GM12878 (cell line): ENCODE measurements at regions of chr11 and their contacts with region 1.

Region 1: DNA sequence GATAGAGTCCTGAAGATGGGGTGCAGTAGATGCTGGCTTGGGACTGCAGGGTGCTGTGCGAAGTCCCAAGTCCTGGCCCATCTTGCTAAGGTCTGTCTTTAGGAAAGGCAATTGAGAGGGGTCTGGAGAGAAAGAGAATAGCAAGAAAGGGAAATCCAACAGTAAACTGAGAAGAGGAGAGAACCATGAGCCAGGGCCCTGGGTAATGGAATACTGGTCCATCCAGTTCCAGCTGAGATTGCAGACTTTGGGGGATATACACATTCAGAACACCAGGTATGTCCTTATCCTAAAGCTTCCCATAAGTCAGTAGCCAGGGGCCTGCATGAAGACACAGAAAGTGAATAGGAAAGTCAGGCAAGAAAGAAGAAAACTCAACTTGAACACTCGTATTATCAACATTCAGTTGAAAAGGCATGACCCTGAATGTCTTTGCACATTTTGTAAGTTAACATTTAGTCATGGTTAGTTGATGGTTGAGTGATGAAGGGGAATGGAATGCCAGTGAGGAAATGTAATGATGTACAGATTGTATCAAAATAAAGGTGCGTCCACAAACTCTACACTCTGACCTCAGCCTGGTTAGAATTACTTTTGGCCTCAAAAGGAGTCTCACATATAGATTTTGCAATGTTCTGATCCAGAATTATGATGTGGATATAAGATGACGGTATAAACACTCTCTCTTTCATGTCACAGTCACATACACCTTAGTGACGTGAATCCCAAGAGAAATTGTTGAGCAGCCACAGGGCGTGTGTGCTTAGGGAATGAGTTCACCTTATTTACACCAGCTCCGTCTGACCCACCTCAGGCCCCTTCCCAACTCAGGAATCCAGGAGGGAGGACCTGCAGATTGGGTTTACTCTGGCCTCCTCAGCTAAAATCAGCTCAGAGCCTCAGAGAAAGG is 100.3 kb downstream of the RDX start:
- DNase-seq: no peak
- ATAC-seq: no peak
- H3K4me3 ChIP-seq: no peak overlapping the region
- H3K27ac ChIP-seq: no peak overlapping the region
- H3K4me1 ChIP-seq: peaks cover 4% of the 10 kb centered on the region; the same call in 1 of the 2 replicates
- H3K27me3 ChIP-seq: no peaks in the 10 kb centered on the region
- CTCF ChIP-seq: no peak
- EP300 ChIP-seq: no peak
- POLR2A ChIP-seq: no peak
- RAD21 ChIP-seq: no peak

Region 2: GRCh38 chr11:109853156-109853776 is 342.8 kb before region 1 on chr11:
- CTCF ChIA-PET with region 1: interaction called, 14 read pairs
- POLR2A ChIA-PET with region 1: no interaction called
- RAD21 ChIA-PET with region 1: interaction called, 9 read pairs
- SMC1A ChIA-PET with region 1: interaction called, 34 read pairs
- in situ Hi-C with region 1: no loop called
- intact Hi-C with region 1: loop called (anchors 5 kb)
- DNase-seq: peak; percentile 56
- ATAC-seq: peak; percentile 89
- H3K4me3 ChIP-seq: no peak overlapping the region
- H3K27ac ChIP-seq: no peak overlapping the region
- H3K4me1 ChIP-seq: no peaks in the 10 kb centered on the region
- H3K27me3 ChIP-seq: no peaks in the 10 kb centered on the region
- CTCF ChIP-seq: peak; percentile 69 to 95 (median 81)
- EP300 ChIP-seq: no peak
- POLR2A ChIP-seq: no peak
- RAD21 ChIP-seq: peak; percentile 99

Region 3: GRCh38 chr11:110230377-110230776 is 34.3 kb after region 1 on chr11:
- CTCF ChIA-PET with region 1: interaction called, 7 read pairs
- POLR2A ChIA-PET with region 1: no interaction called
- RAD21 ChIA-PET with region 1: no interaction called
- SMC1A ChIA-PET with region 1: interaction called, 13 read pairs
- in situ Hi-C with region 1: no loop called
- intact Hi-C with region 1: no loop called
- DNase-seq: no peak
- ATAC-seq: no peak
- H3K4me3 ChIP-seq: no peak overlapping the region
- H3K27ac ChIP-seq: no peak overlapping the region
- H3K4me1 ChIP-seq: no peaks in the 10 kb centered on the region
- H3K27me3 ChIP-seq: no peaks in the 10 kb centered on the region
- CTCF ChIP-seq: no peak
- EP300 ChIP-seq: no peak
- POLR2A ChIP-seq: no peak
- RAD21 ChIP-seq: no peak

Region 4: GRCh38 chr11:110349138-110349996 is 153.3 kb after region 1 on chr11:
- CTCF ChIA-PET with region 1: interaction called, 6 read pairs
- POLR2A ChIA-PET with region 1: no interaction called
- RAD21 ChIA-PET with region 1: interaction called, 4 read pairs
- SMC1A ChIA-PET with region 1: interaction called, 16 read pairs
- in situ Hi-C with region 1: no loop called
- intact Hi-C with region 1: no loop called
- DNase-seq: peak; percentile 94
- ATAC-seq: peak; percentile 86
- H3K4me3 ChIP-seq: peak overlapping the region; percentile 38; the same call in 1 of the 2 replicates
- H3K27ac ChIP-seq: peak overlapping the region; percentile 96
- H3K4me1 ChIP-seq: peaks cover 43% of the 10 kb centered on the region
- H3K27me3 ChIP-seq: no peaks in the 10 kb centered on the region
- CTCF ChIP-seq: peak in 1 of 3 experiments; percentile 33; a peak in 2 of 6 replicates
- EP300 ChIP-seq: peak; percentile 94 to 99
- POLR2A ChIP-seq: peak; percentile 30; the same call in 1 of the 2 replicates
- RAD21 ChIP-seq: peak; percentile 51

Region 5: DNA sequence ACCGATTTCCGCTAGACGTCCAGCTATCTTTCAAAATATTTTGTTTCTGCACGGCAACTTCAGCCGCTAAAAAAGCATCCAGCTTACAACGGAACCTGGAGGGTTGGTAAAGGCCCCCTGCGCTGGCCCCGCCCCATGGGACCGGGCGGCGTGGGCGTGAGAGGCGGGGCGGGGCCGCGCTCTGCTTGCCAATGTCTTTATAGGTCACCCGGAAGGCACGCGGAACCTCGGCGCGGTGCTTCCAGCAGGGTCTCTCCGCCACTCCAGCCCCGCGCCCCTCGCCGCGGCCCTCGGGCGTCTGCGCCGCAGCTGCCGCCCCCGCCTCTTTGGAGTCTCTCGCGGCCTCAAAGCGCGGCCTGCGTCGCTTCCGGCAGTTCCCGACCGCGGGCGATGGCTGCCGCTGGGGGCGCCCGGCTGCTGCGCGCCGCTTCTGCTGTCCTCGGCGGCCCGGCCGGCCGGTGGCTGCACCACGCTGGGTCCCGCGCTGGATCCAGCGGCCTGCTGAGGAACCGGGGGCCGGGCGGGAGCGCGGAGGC is 233.7 kb after region 1 on chr11 and contains the start of gene FDX1:
- CTCF ChIA-PET with region 1: interaction called, 178 read pairs
- POLR2A ChIA-PET with region 1: interaction called, 4 read pairs
- RAD21 ChIA-PET with region 1: interaction called, 42 read pairs
- SMC1A ChIA-PET with region 1: interaction called, 113 read pairs
- in situ Hi-C with region 1: loop called (anchors 5 kb)
- intact Hi-C with region 1: loop called (anchors 1 kb)
- DNase-seq: peak; percentile 23
- ATAC-seq: peak; percentile 92
- H3K4me3 ChIP-seq: peak within 1 kb of the TSS; percentile 67
- H3K27ac ChIP-seq: peak within 1 kb of the TSS; percentile 47
- H3K4me1 ChIP-seq: peaks cover 10% of the 10 kb centered on the region
- H3K27me3 ChIP-seq: no peaks in the 10 kb centered on the region
- CTCF ChIP-seq: peak; percentile 41 to 61 (median 42); a peak in 5 of 6 replicates
- EP300 ChIP-seq: no peak
- POLR2A ChIP-seq: peak; percentile 78
- RAD21 ChIP-seq: no peak
- polyA plus RNA-seq, gene FDX1: 3.9 to 9.6 TPM